Prostate gland (tissue), 2 donors: ENCODE measurements at regions of chr9 and their contacts with region 1.

Region 1: GRCh38 chr9:83649080-83649479 is 26.1 kb downstream of the IDNK start:
- DNase-seq: peak; percentile 49
- H3K4me3 ChIP-seq: no peak overlapping the region
- H3K27ac ChIP-seq: no peak overlapping the region
- H3K4me1 ChIP-seq: no peaks in the 10 kb centered on the region
- H3K27me3 ChIP-seq: no peaks in the 10 kb centered on the region
- CTCF ChIP-seq: peak; percentile 46 to 69 (median 63)
- POLR2A ChIP-seq: no peak

Region 2: GRCh38 chr9:83334320-83334719 is 314.8 kb before region 1 on chr9:
- intact Hi-C with region 1: loop called (anchors 10 kb)
- DNase-seq: peak; percentile 60
- H3K4me3 ChIP-seq: no peak overlapping the region
- H3K27ac ChIP-seq: no peak overlapping the region
- H3K4me1 ChIP-seq: no peaks in the 10 kb centered on the region
- H3K27me3 ChIP-seq: no peaks in the 10 kb centered on the region
- CTCF ChIP-seq: peak; percentile 85 to 93 (median 88)
- POLR2A ChIP-seq: no peak

Region 3: GRCh38 chr9:83511051-83511450 is 138.0 kb before region 1 on chr9:
- intact Hi-C with region 1: no loop called
- DNase-seq: no peak
- H3K4me3 ChIP-seq: no peak overlapping the region
- H3K27ac ChIP-seq: no peak overlapping the region
- H3K4me1 ChIP-seq: no peaks in the 10 kb centered on the region
- H3K27me3 ChIP-seq: no peaks in the 10 kb centered on the region
- CTCF ChIP-seq: no peak
- POLR2A ChIP-seq: no peak